MCF 10A (cell line): ENCODE measurements at regions of chr12 and their contacts with region 1.

Region 1: DNA sequence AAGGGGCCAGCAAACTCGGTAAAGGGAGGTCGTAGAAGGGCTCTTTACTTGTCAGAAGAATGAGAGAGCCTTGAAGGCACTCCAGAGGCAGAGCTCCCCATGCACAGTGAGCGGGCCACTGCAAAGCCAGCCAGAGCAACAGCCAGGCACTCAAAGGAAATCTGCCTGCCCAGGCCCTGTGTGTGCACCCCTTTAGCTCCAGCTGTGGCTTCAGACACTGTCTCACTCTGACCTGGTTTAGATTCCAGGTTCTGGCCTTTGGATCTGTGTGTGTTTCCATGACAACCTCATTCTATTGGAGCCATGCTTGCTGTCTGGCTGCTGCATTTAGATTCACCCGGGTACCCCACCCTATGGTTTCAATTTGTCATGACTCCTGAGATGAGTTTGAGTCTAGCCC is 170.3 kb downstream of the CAPZA3 start:
- DNase-seq: no peak
- H3K4me3 Mint-ChIP-seq: no peak overlapping the region
- H3K27ac Mint-ChIP-seq: peak overlapping the region; percentile 59
- H3K4me1 Mint-ChIP-seq: no peaks in the 10 kb centered on the region
- H3K27me3 Mint-ChIP-seq: no peaks in the 10 kb centered on the region
- CTCF ChIP-seq: no peak

Region 2: GRCh38 chr12:19323805-19324204 is 415.6 kb after region 1 on chr12:
- CTCF ChIA-PET with region 1: interaction called, 10 read pairs
- POLR2A ChIA-PET with region 1: no interaction called
- intact Hi-C with region 1: no loop called
- DNase-seq: no peak
- H3K4me3 Mint-ChIP-seq: no peak overlapping the region
- H3K27ac Mint-ChIP-seq: no peak overlapping the region
- H3K4me1 Mint-ChIP-seq: no peaks in the 10 kb centered on the region
- H3K27me3 Mint-ChIP-seq: no peaks in the 10 kb centered on the region
- CTCF ChIP-seq: no peak